Posterior vena cava (tissue), 2 donors: ENCODE measurements at regions of chr20 and their contacts with region 1.

Region 1: DNA sequence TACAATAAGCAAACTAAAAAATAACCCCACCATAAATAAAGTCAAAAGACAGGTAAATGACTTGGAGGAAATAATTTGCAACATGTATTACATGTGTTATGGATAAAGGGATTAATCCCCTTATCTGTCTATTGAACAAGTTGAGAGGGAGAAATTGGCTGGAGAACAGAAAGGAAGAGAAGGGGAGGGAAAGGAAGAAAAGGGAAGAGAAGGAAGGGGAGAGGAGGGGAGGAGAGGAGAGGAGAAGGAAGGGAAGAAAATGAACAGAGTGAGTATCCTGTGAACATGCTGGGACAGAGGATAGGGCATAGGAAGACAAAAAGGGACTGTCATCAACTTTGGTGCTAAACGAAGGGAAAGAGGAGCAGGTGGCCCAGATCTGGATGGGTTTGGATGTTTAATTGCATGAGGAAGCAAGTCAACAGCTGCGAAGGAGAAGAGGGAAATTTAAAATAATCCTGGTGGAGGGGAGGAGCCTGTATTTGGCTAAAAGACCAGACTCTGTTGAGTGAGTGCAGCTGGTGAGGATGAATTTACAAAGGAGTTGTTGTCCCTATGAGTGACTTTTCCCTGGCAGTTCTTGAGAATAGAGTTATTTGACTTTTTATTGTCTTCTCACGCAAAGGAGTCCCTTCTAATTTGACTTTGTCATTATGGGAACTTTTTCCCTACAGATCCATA is 14.2 kb upstream of the SHLD1 start:
- DNase-seq: no peak

Region 2: DNA sequence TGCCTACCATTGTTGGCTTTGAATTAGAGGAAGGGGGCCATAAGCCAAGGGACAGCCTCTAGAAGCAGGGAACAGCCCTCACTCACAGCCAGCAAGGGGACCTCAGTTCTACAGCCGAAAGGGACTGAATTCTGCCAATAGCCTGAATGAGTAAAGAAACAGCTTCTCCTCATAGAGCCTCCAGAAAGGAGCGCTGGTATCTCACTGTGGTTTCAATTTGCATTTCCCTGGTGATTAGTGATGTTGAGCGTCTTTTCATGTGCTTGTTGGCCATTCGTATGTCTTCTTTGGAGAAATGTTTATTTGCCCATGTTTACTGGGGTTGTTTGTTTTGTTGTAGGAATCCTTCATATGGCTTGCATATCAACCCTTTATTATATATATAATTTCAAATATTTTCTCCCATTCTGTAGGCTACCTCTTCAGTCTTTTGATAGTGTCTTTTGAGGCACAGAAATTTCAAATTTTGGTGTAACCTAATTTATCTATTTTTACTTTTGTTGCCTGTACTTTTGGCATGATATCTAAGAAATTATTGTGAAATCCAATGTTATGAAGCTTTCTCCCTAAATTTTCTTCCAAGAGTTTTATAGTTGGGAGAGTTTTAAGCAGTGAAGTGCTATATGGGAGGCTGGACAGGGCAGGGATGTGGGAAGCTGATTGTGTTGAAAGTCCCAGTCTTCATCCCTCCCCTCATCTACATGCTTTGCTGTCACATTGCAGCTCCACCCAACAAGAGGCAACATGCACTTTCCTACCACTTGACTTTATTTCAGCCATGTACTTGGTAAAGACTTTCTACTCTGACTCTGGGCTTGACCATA is 68.1 kb before region 1 on chr20:
- intact Hi-C with region 1: loop called in 1 of 2 experiments (anchors 10 kb)
- DNase-seq: peak; percentile 5